ENCODE measurements at regions of chr17 and their contacts with region 1.

Region 1: DNA sequence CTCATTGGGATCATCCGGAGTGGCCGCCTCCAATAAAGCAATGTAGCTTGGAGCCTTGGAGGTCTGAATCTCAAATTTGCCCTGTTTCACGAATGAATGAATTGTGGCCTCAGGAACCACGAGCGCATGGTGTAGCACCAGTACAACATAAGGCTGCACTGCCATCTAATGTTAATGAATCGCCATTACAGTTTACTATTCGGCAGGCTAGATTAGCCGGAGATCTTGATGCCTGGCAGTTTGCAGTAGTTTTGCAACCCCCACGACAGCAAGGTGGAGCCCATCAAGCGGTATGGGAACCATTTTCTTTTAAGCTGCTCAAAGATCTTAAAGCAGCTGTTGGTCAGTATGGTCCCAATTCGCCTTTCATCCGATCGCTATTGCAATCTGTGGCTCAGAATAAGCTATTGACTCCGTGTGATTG is 18.8 kb downstream of the ALOX15B start:
- DNase-seq: peak; percentile 92
- H3K4me3 ChIP-seq: no peak overlapping the region
- H3K27ac ChIP-seq: no peak overlapping the region
- H3K4me1 ChIP-seq: peaks cover 17% of the 10 kb centered on the region
- H3K27me3 ChIP-seq: peaks cover 14% of the 10 kb centered on the region
- CTCF ChIP-seq: peak; percentile 80

Region 2: GRCh38 chr17:7862692-7863437 is 194.8 kb before region 1 on chr17:
- CTCF ChIA-PET with region 1: interaction called, 11 read pairs
- POLR2A ChIA-PET with region 1: no interaction called
- intact Hi-C with region 1: loop called (anchors 5 kb)
- DNase-seq: peak; percentile 80
- H3K4me3 ChIP-seq: no peak overlapping the region
- H3K27ac ChIP-seq: no peak overlapping the region
- H3K4me1 ChIP-seq: peaks cover 12% of the 10 kb centered on the region
- H3K27me3 ChIP-seq: no peaks in the 10 kb centered on the region
- CTCF ChIP-seq: peak; percentile 74

Region 3: GRCh38 chr17:7972131-7972785 is 85.4 kb before region 1 on chr17:
- CTCF ChIA-PET with region 1: interaction called, 14 read pairs
- POLR2A ChIA-PET with region 1: no interaction called
- intact Hi-C with region 1: no loop called
- DNase-seq: no peak
- H3K4me3 ChIP-seq: no peak overlapping the region
- H3K27ac ChIP-seq: no peak overlapping the region
- H3K4me1 ChIP-seq: no peaks in the 10 kb centered on the region
- H3K27me3 ChIP-seq: no peaks in the 10 kb centered on the region
- CTCF ChIP-seq: peak; percentile 30; the same call in 1 of the 2 replicates

Region 4: GRCh38 chr17:8016632-8017478 is 40.8 kb before region 1 on chr17:
- CTCF ChIA-PET with region 1: interaction called, 5 read pairs
- POLR2A ChIA-PET with region 1: no interaction called
- intact Hi-C with region 1: loop called (anchors 5 kb)
- DNase-seq: peak; percentile 62
- H3K4me3 ChIP-seq: peak overlapping the region; percentile 43
- H3K27ac ChIP-seq: no peak overlapping the region
- H3K4me1 ChIP-seq: peaks cover 11% of the 10 kb centered on the region
- H3K27me3 ChIP-seq: no peaks in the 10 kb centered on the region
- CTCF ChIP-seq: peak; percentile 92

Region 5: GRCh38 chr17:8073627-8074484 is 16.2 kb after region 1 on chr17:
- CTCF ChIA-PET with region 1: interaction called, 10 read pairs
- POLR2A ChIA-PET with region 1: interaction called, 21 read pairs
- intact Hi-C with region 1: no loop called
- DNase-seq: peak; percentile 79
- H3K4me3 ChIP-seq: peak overlapping the region; percentile 20
- H3K27ac ChIP-seq: no peak overlapping the region
- H3K4me1 ChIP-seq: peaks cover 5% of the 10 kb centered on the region
- H3K27me3 ChIP-seq: peaks cover 31% of the 10 kb centered on the region
- CTCF ChIP-seq: peak; percentile 97